Gastrocnemius medialis (tissue), 4 donors: ENCODE measurements at regions of chr5 and their contacts with region 1.

Region 1: GRCh38 chr5:54517174-54518092 is at the start of gene SNX18:
- DNase-seq: peak; percentile 88
- ATAC-seq: peak; percentile 91 to 93
- H3K4me3 ChIP-seq: peak within 1 kb of the TSS; percentile 76 to 93 (median 86)
- H3K27ac ChIP-seq: peak within 1 kb of the TSS; percentile 79 to 94 (median 92)
- H3K4me1 ChIP-seq: peaks cover 34 to 36% of the 10 kb centered on the region in 2 donors
- H3K27me3 ChIP-seq: no peaks in the 10 kb centered on the region
- CTCF ChIP-seq: peak; percentile 96 to 99 (median 98)
- POLR2A ChIP-seq: peak; percentile 78 to 83
- total RNA-seq, gene SNX18: 16.3 to 18.5 (median 18.0) TPM

Region 2: GRCh38 chr5:54547711-54548250 is 30.3 kb after region 1 on chr5:
- in situ Hi-C with region 1: no loop called
- intact Hi-C with region 1: loop called (anchors 2 kb)
- DNase-seq: peak; percentile 70 to 81
- ATAC-seq: peak; percentile 99 to 100
- H3K4me3 ChIP-seq: no peak overlapping the region
- H3K27ac ChIP-seq: peak overlapping the region in 3 of 4 donors; percentile 15 to 45 (median 28)
- H3K4me1 ChIP-seq: peaks cover 4 to 11% of the 10 kb centered on the region in 2 donors
- H3K27me3 ChIP-seq: no peaks in the 10 kb centered on the region
- CTCF ChIP-seq: no peak
- POLR2A ChIP-seq: no peak

Region 3: GRCh38 chr5:54844905-54845566 is 327.6 kb after region 1 on chr5:
- in situ Hi-C with region 1: loop called in 3 of 4 experiments (anchors 5 to 10 kb)
- intact Hi-C with region 1: loop called (anchors 1 kb)
- DNase-seq: no peak
- ATAC-seq: no peak
- H3K4me3 ChIP-seq: peak overlapping the region; percentile 33 to 70 (median 40)
- H3K27ac ChIP-seq: peak overlapping the region in 1 of 4 donors; percentile 54
- H3K4me1 ChIP-seq: peaks cover 0 to 6% of the 10 kb centered on the region in 2 donors
- H3K27me3 ChIP-seq: no peaks in the 10 kb centered on the region
- CTCF ChIP-seq: peak; percentile 42 to 63 (median 55)
- POLR2A ChIP-seq: no peak

Region 4: DNA sequence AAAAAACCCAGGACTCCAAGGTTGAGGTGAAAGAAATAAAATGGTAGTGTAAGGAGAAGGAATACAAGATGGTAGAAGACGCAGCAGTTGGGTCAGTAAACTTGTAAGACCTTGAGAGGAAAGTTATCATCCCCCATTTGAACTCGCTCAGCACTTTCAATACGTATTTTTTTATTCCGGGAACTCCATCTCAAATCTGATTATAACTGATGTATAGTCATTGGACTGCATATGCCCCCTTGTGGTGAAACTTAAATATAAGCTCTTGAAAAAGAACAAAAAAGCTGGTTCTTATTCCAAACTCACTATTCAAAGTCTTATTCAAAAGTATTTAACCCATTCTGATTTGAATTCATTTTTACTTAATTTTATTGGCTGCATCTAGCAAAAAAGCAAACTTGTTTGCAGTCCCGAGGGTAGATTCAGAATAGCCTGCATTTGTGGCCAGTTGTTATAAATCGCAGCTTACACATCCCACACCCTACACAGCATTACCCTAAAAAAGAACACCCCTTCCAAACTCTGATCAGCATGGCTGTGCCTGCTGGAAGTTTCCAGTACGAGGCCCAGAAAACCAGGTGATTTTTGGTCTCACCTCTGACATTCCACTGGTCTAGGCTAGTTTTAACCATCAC is 350.0 kb after region 1 on chr5:
- in situ Hi-C with region 1: no loop called
- intact Hi-C with region 1: loop called (anchors 1 kb)
- DNase-seq: no peak
- ATAC-seq: peak; percentile 61 to 62
- H3K4me3 ChIP-seq: peak overlapping the region in 3 of 4 donors; percentile 23 to 37 (median 33)
- H3K27ac ChIP-seq: no peak overlapping the region
- H3K4me1 ChIP-seq: no peaks in the 10 kb centered on the region
- H3K27me3 ChIP-seq: no peaks in the 10 kb centered on the region
- CTCF ChIP-seq: peak; percentile 32 to 69 (median 55)
- POLR2A ChIP-seq: no peak

Region 5: DNA sequence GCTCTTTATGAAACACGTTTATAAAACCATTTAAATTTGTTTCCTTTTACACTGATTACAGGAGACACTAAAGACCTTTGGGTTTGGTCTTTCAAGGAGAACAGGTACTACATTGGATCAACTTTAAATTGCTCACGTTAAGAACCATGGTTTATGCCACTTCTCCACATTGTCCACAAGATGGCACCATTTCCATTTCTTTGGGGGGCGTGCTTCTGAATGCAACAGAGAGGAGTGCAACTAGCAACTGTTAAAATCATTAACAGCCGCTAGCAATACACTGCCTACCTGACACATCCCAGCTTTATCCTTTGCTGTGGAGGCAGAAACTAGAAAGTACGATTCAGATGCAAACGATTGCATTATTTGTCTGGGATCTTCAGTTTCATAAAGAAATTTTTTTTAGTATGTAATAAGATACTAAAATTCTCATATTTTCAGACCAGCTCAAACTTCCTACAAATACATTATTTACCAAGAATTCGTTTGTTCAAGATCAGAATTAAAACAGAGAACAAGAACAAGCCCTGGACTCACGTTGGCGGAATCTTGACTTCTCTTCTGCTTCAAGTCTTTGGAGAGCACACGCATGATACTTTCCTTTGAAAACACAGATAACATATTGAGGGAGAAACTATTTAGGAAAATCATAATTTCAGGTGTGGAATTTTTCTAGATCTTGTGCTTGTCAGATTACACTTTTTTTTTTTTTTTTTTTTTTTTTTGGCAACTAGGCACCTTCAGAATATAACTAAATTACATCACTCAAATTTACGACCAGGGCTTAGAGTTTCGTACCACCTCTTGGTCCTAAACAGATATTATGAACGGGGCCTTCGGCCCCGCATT is 654.8 kb after region 1 on chr5:
- in situ Hi-C with region 1: loop called in 3 of 4 experiments (anchors 25 kb)
- intact Hi-C with region 1: no loop called
- DNase-seq: peak in 1 of 2 donors; percentile 34
- ATAC-seq: peak; percentile 84 to 91
- H3K4me3 ChIP-seq: peak overlapping the region; percentile 44 to 67 (median 60)
- H3K27ac ChIP-seq: no peak overlapping the region
- H3K4me1 ChIP-seq: peaks cover 20 to 27% of the 10 kb centered on the region in 2 donors
- H3K27me3 ChIP-seq: peaks cover 39 to 44% (median 39%) of the 10 kb centered on the region in 3 donors
- CTCF ChIP-seq: peak; percentile 50 to 85 (median 71)
- POLR2A ChIP-seq: no peak